ENCODE measurements at regions of chr7 and their contacts with region 1.

Region 1: GRCh38 chr7:100126931-100127865 is at the start of gene MBLAC1:
- DNase-seq: peak; percentile 97
- ATAC-seq: peak; percentile 83
- H3K4me3 ChIP-seq: peak within 1 kb of the TSS; percentile 54 to 84 (median 78)
- H3K4me3 Mint-ChIP-seq: peak within 1 kb of the TSS; percentile 100
- H3K27ac ChIP-seq: peak within 1 kb of the TSS; percentile 83 to 95
- H3K27ac Mint-ChIP-seq: peak within 1 kb of the TSS; percentile 100
- H3K4me1 ChIP-seq: peaks cover 20 to 36% of the 10 kb centered on the region in 2 donors
- H3K4me1 Mint-ChIP-seq: peaks cover 31% of the 10 kb centered on the region
- H3K27me3 ChIP-seq: no peaks in the 10 kb centered on the region
- H3K27me3 Mint-ChIP-seq: no peaks in the 10 kb centered on the region
- CTCF ChIP-seq: no peak
- total RNA-seq, gene MBLAC1: 4.5 TPM in 2 replicates

Region 2: DNA sequence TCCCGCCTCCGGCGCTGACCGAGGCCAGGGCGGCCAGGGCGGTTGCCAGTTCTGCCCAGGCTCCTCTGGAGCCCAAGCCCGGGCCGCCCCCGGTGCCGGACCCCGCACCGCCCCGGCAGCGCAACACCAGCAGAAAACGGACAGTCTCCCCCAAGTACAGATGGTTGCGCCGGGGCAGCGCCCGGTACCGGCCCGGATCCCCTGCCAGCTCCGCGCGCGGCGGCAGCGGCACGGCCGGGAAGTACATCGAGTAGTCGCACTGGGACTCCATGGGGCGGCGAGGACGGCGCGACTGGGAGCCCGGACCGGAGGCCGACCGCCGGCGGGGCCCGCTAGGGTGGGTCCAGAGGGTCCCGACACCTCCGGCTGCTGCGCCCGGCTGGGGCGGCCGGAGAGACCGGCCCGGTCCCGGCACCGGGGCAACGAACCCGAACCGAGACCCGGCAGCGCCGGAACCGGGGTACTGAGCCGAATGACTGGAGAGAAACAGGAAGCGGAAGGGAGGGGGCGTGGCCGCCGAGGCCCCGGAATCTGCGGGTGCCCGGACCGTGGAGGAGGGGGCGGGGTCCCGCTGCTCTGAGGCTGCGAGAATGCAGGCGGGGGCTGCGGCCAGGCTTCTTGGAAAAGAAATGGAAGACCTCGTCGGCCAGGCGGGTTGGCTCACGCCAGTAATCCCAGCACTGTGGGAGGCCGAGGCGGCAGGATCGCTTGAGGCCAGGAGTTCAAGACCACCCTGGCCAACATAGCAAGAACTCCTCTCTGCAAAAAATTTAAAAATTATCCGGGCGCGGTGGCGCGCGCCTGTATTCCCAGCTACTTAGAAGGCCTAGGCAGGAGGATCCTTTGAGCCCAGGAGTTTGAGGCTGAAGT is 31.3 kb after region 1 on chr7 and contains the start of gene TRAPPC14:
- CTCF ChIA-PET with region 1: interaction called, 18 read pairs
- POLR2A ChIA-PET with region 1: no interaction called
- intact Hi-C with region 1: loop called (anchors 1 kb)
- DNase-seq: peak; percentile 93
- ATAC-seq: peak; percentile 93
- H3K4me3 ChIP-seq: peak within 1 kb of the TSS; percentile 56 to 95 (median 73)
- H3K4me3 Mint-ChIP-seq: peak within 1 kb of the TSS; percentile 89
- H3K27ac ChIP-seq: peak within 1 kb of the TSS; percentile 68 to 84
- H3K27ac Mint-ChIP-seq: peak within 1 kb of the TSS; percentile 90
- H3K4me1 ChIP-seq: peaks cover 22 to 27% of the 10 kb centered on the region in 2 donors
- H3K4me1 Mint-ChIP-seq: peaks cover 43% of the 10 kb centered on the region
- H3K27me3 ChIP-seq: no peaks in the 10 kb centered on the region
- H3K27me3 Mint-ChIP-seq: no peaks in the 10 kb centered on the region
- CTCF ChIP-seq: no peak
- total RNA-seq, gene TRAPPC14: 71.2 and 75.8 TPM in 2 replicates

Region 3: DNA sequence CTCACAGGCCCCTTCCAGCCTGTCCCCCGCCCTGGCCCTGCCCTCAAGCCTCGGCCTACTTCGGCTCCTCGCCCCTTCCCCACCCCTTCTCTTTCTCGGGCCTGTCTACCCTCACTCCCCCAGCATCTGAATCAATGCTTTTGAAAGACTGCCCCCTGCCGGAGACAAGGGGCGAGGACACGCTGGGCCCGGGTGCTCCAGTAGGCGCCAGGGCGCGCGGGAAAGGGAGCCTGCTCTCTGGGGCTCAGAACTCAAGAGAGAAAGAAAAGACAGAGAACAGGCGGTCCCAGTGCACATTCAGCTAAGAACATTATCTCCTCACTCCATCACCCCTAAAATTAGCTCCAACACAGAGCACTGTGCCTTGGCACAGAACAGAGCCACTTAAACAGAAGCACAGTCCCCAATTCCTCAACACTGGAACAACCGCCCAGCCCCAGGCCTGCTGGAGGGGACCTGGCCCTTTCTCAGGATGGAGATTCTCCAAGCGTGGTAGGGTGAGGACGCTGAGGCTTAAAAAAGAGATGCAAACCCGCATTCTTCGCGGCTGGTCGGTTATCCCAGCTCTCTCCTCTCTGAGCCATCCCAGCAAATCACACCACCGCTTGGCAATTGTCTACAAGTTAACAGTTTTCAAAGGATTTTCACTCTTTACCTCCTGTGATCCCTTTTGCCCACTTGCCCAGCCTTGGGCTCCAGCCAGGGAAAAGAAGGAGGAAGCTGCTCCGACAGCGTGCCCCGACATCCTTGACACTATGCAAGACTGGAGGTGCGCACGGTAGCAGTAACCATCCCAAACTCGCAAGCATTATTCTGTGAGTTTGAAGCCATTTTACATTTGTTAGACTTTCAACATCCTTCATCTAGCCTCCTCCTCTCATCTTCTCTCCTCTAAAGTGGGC is 564.7 kb after region 1 on chr7:
- CTCF ChIA-PET with region 1: no interaction called
- POLR2A ChIA-PET with region 1: no interaction called
- intact Hi-C with region 1: no loop called
- DNase-seq: peak; percentile 86
- ATAC-seq: peak; percentile 60
- H3K4me3 ChIP-seq: peak overlapping the region in 2 of 5 experiments; percentile 58 to 79
- H3K4me3 Mint-ChIP-seq: peak overlapping the region; percentile 89
- H3K27ac ChIP-seq: no peak overlapping the region
- H3K27ac Mint-ChIP-seq: peak overlapping the region; percentile 92
- H3K4me1 ChIP-seq: peaks cover 52 to 55% of the 10 kb centered on the region in 2 donors
- H3K4me1 Mint-ChIP-seq: peaks cover 51% of the 10 kb centered on the region
- H3K27me3 ChIP-seq: no peaks in the 10 kb centered on the region
- H3K27me3 Mint-ChIP-seq: no peaks in the 10 kb centered on the region
- CTCF ChIP-seq: peak; percentile 88

Measured in B cell (primary cell).